Activated naive CD4-positive, alpha-beta T cell treated with anti-CD3 and anti-CD28 coated beads for 36 hours (primary cell): ENCODE measurements at regions of chr17 and their contacts with region 1.

Region 1: GRCh38 chr17:27181935-27182334 is 112.0 kb upstream of the WSB1 start:
- DNase-seq: no peak
- H3K4me3 Mint-ChIP-seq: no peak overlapping the region
- H3K27ac Mint-ChIP-seq: no peak overlapping the region
- H3K4me1 Mint-ChIP-seq: no peaks in the 10 kb centered on the region
- H3K27me3 Mint-ChIP-seq: no peaks in the 10 kb centered on the region

Region 2: DNA sequence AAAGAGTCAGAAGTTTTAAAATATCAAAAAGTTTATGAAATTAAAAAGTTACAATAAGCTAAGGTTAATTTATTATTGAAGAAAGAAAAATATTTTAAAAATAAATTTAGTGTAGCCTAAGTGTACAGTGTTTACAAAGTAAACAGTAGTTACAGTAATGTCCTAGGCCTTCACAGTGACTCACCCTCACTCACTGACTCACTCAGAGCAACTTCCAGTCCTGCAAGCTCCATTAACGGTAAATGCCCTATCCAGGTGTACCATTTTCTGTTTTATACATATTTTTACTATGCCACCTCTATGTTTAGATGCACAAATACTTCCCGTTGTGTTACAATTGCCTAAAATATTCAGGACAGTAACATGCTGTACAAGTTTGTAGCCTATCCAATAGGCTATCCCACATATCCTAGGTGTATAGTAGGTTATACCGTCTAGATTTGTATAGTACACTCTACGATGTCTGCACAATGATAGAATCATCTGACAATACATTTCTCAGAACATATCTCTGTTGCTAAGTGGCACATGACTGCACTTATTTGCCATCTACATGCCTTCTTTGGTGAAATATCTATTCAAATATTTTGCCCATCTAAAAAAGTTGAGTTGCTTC is 44.8 kb after region 1 on chr17:
- CTCF ChIA-PET with region 1: no interaction called
- intact Hi-C with region 1: loop called (anchors 10 kb)
- DNase-seq: no peak
- H3K4me3 Mint-ChIP-seq: no peak overlapping the region
- H3K27ac Mint-ChIP-seq: no peak overlapping the region
- H3K4me1 Mint-ChIP-seq: no peaks in the 10 kb centered on the region
- H3K27me3 Mint-ChIP-seq: no peaks in the 10 kb centered on the region